Transverse colon (tissue), 4 donors: ENCODE measurements at regions of chr2 and their contacts with region 1.

Region 1: DNA sequence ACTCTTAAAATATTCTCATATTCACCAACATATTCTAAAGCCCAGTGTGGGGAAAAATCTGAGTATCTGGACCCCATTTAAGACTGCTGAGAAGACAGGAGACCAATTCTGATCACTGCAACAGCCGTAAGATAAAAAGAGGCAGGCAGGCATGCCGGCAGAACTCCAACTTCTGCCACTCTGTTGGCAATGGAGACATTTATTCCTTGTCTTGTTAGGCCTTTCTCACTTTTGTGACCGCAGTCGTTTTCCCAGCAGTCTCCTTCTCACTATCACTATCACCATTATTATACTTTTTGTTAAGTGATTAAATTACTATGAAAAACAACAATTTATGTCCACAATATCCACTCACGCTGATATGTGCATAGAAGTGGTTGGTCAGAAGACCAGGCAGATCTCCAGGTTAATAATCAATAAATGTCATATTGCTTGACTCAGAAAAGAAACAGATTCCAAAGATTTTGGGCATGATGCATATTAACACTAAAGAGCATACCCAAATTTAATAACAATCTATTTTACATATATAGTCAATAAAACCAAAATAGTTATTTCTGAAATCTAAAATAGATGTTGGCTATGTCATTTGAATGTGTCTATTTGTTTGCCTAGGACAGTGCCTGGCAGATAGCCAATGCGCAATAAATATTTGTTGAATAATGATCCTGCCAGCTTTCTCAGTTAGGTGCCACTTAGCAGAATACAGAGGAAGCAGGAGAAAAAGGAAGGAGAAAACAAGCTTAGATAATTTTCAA is 38.2 kb downstream of the SESTD1 start:
- DNase-seq: no peak
- H3K4me3 ChIP-seq: no peak overlapping the region
- H3K27ac ChIP-seq: no peak overlapping the region
- H3K4me1 ChIP-seq: peaks cover 0 to 17% (median 0%) of the 10 kb centered on the region in 4 donors
- H3K27me3 ChIP-seq: no peaks in the 10 kb centered on the region
- CTCF ChIP-seq: no peak
- EP300 ChIP-seq: no peak
- POLR2A ChIP-seq: no peak

Region 2: GRCh38 chr2:179082697-179083096 is 143.7 kb before region 1 on chr2:
- in situ Hi-C with region 1: no loop called
- intact Hi-C with region 1: no loop called
- DNase-seq: no peak
- H3K4me3 ChIP-seq: no peak overlapping the region
- H3K27ac ChIP-seq: no peak overlapping the region
- H3K4me1 ChIP-seq: no peaks in the 10 kb centered on the region
- H3K27me3 ChIP-seq: no peaks in the 10 kb centered on the region
- CTCF ChIP-seq: no peak
- EP300 ChIP-seq: no peak
- POLR2A ChIP-seq: no peak

Region 3: DNA sequence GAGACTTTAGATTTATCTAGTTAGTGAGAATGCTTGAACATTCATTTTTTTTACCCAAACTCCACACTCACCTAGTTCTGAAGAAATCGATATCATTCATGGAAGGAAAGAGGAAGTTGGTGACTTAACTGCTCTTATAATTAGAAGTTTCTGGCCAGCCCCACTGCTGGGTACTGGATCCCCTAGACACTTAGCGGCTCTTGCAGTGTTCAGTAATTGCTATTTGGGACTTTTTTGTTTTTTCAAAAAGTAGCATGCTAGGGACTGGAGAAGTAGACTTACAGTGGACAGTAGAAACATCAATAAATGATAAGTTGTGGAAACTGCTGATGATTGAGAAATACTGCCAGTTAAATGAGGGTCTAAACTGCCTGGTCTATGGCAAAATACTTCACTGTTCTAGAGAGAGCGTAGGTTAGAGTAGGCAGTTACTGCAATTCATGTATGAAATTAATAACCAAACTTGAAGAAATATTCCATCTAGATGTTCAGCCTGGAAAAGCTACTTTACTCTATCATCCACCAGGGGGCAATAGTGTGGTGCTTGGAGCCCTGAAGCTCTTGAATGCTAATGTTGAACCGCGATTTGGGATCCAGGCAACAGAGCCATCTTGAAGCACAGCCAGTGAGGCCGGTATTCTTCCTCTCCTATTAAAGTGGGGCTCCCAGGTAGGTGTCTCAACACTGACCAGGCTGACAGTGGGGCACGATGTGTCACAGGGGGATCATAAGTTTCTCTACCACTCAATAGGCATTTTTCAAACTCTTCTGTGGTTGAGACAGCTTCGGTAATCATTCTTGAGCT is 184.4 kb after region 1 on chr2:
- in situ Hi-C with region 1: loop called in 2 of 4 experiments (anchors 10 to 25 kb)
- intact Hi-C with region 1: no loop called
- DNase-seq: peak; percentile 16
- H3K4me3 ChIP-seq: no peak overlapping the region
- H3K27ac ChIP-seq: no peak overlapping the region
- H3K4me1 ChIP-seq: no peaks in the 10 kb centered on the region
- H3K27me3 ChIP-seq: no peaks in the 10 kb centered on the region
- CTCF ChIP-seq: peak; percentile 51 to 77 (median 74)
- EP300 ChIP-seq: no peak
- POLR2A ChIP-seq: no peak